Ascending aorta (tissue), 2 donors: ENCODE measurements at regions of chr3 and their contacts with region 1.

Region 1: GRCh38 chr3:138186803-138187295 is 252 bp upstream of the ARMC8 start:
- DNase-seq: peak; percentile 58 to 95
- H3K4me3 ChIP-seq: peak overlapping the region; percentile 95 to 100
- H3K27ac ChIP-seq: peak overlapping the region; percentile 97 to 100
- H3K4me1 ChIP-seq: peaks cover 2 to 24% of the 10 kb centered on the region in 2 donors
- H3K27me3 ChIP-seq: no peaks in the 10 kb centered on the region
- CTCF ChIP-seq: no peak

Region 2: DNA sequence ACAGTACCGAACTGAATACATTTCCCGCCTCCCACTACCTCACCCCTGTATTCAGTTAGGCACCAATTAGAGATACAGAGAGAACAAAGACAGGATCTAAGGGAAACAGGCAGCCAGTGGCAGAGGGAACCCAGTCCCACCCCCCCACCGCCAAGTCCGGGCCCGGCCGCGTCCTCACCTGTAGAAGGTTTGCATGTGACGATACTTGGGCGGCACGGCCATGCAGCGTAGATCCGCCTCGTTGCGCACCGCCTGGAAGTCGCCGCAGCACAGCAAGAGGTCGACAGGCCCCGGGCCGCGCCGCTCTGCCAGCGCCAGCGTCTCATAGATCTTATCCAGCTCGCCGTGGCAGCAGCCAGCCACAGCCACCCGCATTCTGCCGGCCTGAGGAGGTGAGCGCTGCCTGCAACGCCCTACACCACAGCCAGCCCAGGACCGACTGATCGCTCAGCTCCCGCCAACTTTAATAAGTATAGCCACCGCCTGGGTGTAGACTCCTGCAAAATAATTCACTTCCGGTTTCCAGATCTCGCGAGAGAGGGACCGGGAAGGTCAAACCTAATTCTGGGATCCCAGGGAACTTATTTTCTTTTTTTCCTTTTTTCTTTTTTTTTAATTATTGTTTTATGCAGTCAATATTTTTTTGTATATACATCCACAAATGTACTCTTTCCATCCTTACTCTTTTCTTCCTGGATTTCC is 12.3 kb before region 1 on chr3 and contains the start of gene DBR1:
- intact Hi-C with region 1: loop called (anchors 1 kb)
- DNase-seq: peak; percentile 15 to 88
- H3K4me3 ChIP-seq: peak within 1 kb of the TSS; percentile 62 to 70
- H3K27ac ChIP-seq: peak within 1 kb of the TSS; percentile 53 to 71
- H3K4me1 ChIP-seq: peaks cover 5 to 13% of the 10 kb centered on the region in 2 donors
- H3K27me3 ChIP-seq: no peaks in the 10 kb centered on the region
- CTCF ChIP-seq: no peak
- total RNA-seq, gene DBR1: 2.0 TPM

Region 3: DNA sequence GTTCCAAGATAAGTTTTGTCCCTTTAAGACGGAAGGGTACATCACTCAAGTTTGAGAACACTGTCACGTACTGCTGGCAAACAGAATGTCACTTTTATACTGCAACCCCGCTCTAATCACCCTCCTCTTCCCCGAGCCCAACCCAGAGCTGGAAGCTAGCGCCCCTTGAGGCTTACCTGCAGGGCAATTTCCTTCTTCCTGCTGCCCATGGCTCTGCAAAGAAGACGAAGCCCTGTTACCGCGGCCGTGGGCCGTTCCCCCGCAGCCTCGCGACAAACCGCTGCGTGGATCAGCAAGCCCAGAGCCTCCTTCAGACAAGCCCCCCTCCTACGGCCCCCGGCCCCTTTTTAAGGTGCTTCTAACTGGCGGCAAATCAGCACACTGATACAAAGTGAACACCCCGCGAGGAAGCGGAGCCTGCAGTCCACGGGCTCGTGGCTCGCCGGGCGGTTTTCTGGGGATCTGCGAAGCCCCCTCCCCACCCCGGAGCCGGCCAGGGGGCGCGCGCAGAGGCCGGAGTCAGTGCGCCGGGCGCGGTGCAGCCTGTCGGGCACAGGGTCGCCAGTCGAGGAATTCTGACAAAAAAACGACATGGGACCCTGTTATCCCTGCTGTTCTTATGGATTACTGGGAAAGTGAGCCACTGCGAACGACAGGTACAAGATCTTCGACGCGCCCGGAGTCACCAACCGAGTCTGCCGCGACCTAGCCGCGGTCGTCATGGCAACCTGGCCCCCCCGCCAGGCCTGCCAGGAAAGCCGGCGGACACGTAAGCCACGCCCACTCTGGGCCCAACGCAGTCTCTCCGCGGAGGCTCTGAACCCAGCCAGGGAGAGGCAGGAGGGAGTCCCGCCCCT is 142.5 kb after region 1 on chr3 and contains the start of gene NME9:
- intact Hi-C with region 1: loop called (anchors 5 kb)
- DNase-seq: peak; percentile 53 to 93
- H3K4me3 ChIP-seq: peak within 1 kb of the TSS; percentile 51 to 76
- H3K27ac ChIP-seq: peak within 1 kb of the TSS; percentile 2 to 29
- H3K4me1 ChIP-seq: peaks cover 3 to 6% of the 10 kb centered on the region in 2 donors
- H3K27me3 ChIP-seq: no peaks in the 10 kb centered on the region
- CTCF ChIP-seq: peak in 2 of 3 experiments; percentile 49 to 68
- total RNA-seq, gene NME9: not detected

Region 4: GRCh38 chr3:138347960-138348753 is 161.3 kb after region 1 on chr3 and contains the start of gene MRAS:
- intact Hi-C with region 1: loop called (anchors 1 kb)
- DNase-seq: peak; percentile 28 to 91
- H3K4me3 ChIP-seq: peak within 1 kb of the TSS; percentile 96 to 98
- H3K27ac ChIP-seq: peak within 1 kb of the TSS; percentile 92 to 99
- H3K4me1 ChIP-seq: peaks cover 5 to 7% of the 10 kb centered on the region in 2 donors
- H3K27me3 ChIP-seq: no peaks in the 10 kb centered on the region
- CTCF ChIP-seq: peak in 2 of 3 experiments; percentile 28 to 39
- total RNA-seq, gene MRAS: 24.5 TPM

Region 5: GRCh38 chr3:138834359-138835212 is 647.7 kb after region 1 on chr3 and contains the start of gene PIK3CB:
- intact Hi-C with region 1: loop called (anchors 10 kb)
- DNase-seq: peak; percentile 31 to 93
- H3K4me3 ChIP-seq: peak within 1 kb of the TSS; percentile 70 to 98
- H3K27ac ChIP-seq: peak within 1 kb of the TSS; percentile 89 to 90
- H3K4me1 ChIP-seq: peaks cover 0 to 13% of the 10 kb centered on the region in 2 donors
- H3K27me3 ChIP-seq: no peaks in the 10 kb centered on the region
- CTCF ChIP-seq: peak; percentile 26 to 39 (median 28)
- total RNA-seq, gene PIK3CB: 9.3 TPM

Region 6: DNA sequence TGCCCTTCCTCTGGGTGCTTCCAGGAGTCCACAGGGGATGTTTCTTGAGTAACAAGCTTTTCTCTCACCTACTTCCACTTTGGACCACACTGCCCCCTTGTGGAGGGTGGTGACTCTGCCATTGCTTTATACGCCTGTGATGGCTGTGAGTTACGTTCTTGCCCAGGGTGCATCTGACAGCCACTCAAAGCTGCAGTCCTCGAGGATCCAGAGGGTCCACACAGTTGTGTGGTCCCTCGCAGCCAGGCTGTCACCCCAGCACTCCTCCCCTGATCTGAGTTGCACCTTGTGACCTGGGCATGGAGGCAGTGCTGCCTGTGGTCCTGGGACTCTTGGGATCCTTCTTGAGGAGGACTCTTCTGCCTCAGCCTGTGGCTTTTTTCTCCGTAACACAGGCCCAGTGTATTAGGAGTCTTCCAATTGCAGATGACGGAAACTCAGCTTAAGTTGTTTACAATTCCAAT is 736.7 kb after region 1 on chr3:
- intact Hi-C with region 1: loop called (anchors 10 kb)
- DNase-seq: peak; percentile 41 to 87
- H3K4me3 ChIP-seq: no peak overlapping the region
- H3K27ac ChIP-seq: no peak overlapping the region
- H3K4me1 ChIP-seq: peaks cover 0 to 2% of the 10 kb centered on the region in 2 donors
- H3K27me3 ChIP-seq: no peaks in the 10 kb centered on the region
- CTCF ChIP-seq: peak; percentile 42 to 76 (median 72)